MCF 10A (cell line): ENCODE measurements at regions of chr17 and their contacts with region 1.

Region 1: GRCh38 chr17:76737082-76737675 is at the start of gene SRSF2:
- DNase-seq: peak; percentile 98
- H3K4me3 Mint-ChIP-seq: peak within 1 kb of the TSS; percentile 100
- H3K27ac Mint-ChIP-seq: peak within 1 kb of the TSS; percentile 97
- H3K4me1 Mint-ChIP-seq: peaks cover 20% of the 10 kb centered on the region
- H3K27me3 Mint-ChIP-seq: no peaks in the 10 kb centered on the region
- CTCF ChIP-seq: no peak
- total RNA-seq, gene SRSF2: 161 and 168 TPM in 2 replicates

Region 2: DNA sequence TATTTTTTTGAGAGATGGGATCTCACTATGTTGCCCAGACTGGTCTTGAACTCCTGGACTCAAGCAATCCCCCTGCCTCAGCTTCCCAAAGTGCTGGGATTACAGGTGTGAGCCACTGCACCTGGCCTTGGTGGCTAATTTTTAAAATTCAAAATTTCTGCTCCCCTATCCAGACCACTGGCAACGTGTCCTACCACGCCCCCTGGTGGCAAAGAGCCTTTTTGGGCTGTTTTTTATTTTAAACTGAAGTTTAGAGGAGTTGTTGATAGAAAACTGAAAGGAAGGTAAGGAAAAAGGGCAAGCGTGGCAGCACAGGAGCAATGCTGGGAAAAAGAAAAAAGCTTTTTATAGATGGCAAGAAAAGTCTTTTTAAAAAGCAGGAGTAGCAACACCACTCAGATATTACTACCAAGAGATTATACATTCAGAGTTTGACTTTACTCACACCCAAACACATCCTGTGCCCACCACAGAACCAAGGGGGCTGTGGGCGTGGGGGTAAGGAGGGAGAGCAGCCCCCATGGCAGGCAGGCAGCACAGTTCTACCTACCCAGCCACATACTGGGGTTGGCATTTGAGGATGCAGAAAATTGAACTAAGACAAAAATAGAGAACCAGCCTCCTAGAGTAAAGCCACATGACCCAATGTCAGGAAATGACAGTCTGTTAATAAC is 22.2 kb before region 1 on chr17:
- CTCF ChIA-PET with region 1: interaction called, 3 read pairs
- POLR2A ChIA-PET with region 1: interaction called, 33 read pairs
- intact Hi-C with region 1: no loop called
- DNase-seq: peak; percentile 67
- H3K4me3 Mint-ChIP-seq: no peak overlapping the region
- H3K27ac Mint-ChIP-seq: peak overlapping the region; percentile 55
- H3K4me1 Mint-ChIP-seq: peaks cover 13% of the 10 kb centered on the region
- H3K27me3 Mint-ChIP-seq: no peaks in the 10 kb centered on the region
- CTCF ChIP-seq: peak; percentile 74

Region 3: GRCh38 chr17:76726231-76726775 is 10.9 kb before region 1 on chr17 and contains the start of gene JMJD6:
- CTCF ChIA-PET with region 1: interaction called, 3 read pairs
- POLR2A ChIA-PET with region 1: interaction called, 150 read pairs
- intact Hi-C with region 1: no loop called
- DNase-seq: peak; percentile 97
- H3K4me3 Mint-ChIP-seq: peak within 1 kb of the TSS; percentile 90
- H3K27ac Mint-ChIP-seq: peak within 1 kb of the TSS; percentile 94
- H3K4me1 Mint-ChIP-seq: peaks cover 6% of the 10 kb centered on the region
- H3K27me3 Mint-ChIP-seq: no peaks in the 10 kb centered on the region
- CTCF ChIP-seq: no peak
- total RNA-seq, gene JMJD6: 29.4 and 45.8 TPM in 2 replicates

Region 4: GRCh38 chr17:76747716-76748363 is 10.7 kb after region 1 on chr17:
- CTCF ChIA-PET with region 1: interaction called, 5 read pairs
- POLR2A ChIA-PET with region 1: interaction called, 26 read pairs
- intact Hi-C with region 1: no loop called
- DNase-seq: no peak
- H3K4me3 Mint-ChIP-seq: no peak overlapping the region
- H3K27ac Mint-ChIP-seq: no peak overlapping the region
- H3K4me1 Mint-ChIP-seq: no peaks in the 10 kb centered on the region
- H3K27me3 Mint-ChIP-seq: no peaks in the 10 kb centered on the region
- CTCF ChIP-seq: no peak

Region 5: DNA sequence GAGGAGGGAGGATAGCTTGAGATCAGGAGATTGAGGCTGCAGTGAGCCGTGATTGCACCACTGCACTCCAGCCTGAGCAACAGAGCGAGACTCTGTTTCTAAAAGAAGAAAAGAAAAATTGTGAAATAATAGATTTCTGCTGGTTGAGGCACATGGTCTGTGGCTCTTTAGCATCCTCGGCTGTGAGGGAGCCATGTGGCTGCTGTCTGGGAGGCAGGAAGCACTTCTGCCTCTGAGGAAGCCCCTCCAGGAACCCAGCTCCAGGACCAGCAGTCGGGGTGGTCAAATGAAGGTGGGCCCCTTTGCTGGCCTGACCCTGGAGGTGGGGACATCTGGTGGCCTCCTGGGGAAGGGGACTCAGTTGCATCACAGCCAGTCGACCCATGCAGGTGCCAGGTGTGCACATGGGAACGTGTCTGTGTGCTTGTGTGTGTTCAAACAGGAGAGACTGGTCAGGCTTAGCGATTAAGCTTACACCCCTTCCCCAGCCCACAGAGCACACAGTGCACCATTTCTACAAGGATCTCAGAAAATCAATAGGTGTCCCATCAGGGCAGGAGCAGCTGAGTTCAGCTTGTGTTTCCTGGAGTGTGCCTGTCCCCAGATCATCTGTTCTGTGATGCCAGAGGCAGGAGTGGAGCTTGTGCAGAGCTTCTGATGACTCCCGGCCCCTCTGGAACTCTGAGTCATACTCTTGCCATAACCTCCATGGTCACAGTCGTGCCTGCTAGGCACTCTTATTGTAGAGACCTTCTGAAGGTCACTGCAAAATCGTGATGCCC is 106.7 kb after region 1 on chr17:
- CTCF ChIA-PET with region 1: no interaction called
- POLR2A ChIA-PET with region 1: no interaction called
- intact Hi-C with region 1: loop called (anchors 1 kb)
- DNase-seq: no peak
- H3K4me3 Mint-ChIP-seq: no peak overlapping the region
- H3K27ac Mint-ChIP-seq: no peak overlapping the region
- H3K4me1 Mint-ChIP-seq: peaks cover 9% of the 10 kb centered on the region
- H3K27me3 Mint-ChIP-seq: peaks cover 67% of the 10 kb centered on the region
- CTCF ChIP-seq: no peak

Region 6: DNA sequence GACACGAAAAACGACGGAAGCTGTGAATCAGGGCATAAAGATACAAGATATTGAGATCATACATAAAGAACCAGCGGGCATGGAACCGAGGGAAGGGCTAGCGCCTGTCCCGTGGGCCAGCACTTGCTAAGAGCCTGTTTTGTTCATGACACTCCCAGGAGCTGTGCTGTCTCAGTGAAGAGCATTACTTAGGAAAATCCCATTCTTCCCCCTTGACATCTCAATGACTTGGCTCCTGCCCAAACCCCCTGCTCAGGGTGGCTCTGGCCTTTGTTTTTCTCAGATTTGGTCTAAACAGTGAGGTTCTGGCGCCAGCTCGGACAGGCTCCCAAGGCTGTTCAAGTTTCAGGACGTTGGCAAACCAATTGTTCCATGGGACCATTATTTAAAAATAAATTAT is 324.5 kb after region 1 on chr17:
- CTCF ChIA-PET with region 1: no interaction called
- POLR2A ChIA-PET with region 1: interaction called, 5 read pairs
- intact Hi-C with region 1: loop called (anchors 10 kb)
- DNase-seq: no peak
- H3K4me3 Mint-ChIP-seq: no peak overlapping the region
- H3K27ac Mint-ChIP-seq: no peak overlapping the region
- H3K4me1 Mint-ChIP-seq: no peaks in the 10 kb centered on the region
- H3K27me3 Mint-ChIP-seq: peaks cover 16% of the 10 kb centered on the region
- CTCF ChIP-seq: no peak